Activated B cell treated with CpG ODN at 0.5 μM for 24 hours (primary cell): ENCODE measurements at regions of chr2 and their contacts with region 1.

Region 1: DNA sequence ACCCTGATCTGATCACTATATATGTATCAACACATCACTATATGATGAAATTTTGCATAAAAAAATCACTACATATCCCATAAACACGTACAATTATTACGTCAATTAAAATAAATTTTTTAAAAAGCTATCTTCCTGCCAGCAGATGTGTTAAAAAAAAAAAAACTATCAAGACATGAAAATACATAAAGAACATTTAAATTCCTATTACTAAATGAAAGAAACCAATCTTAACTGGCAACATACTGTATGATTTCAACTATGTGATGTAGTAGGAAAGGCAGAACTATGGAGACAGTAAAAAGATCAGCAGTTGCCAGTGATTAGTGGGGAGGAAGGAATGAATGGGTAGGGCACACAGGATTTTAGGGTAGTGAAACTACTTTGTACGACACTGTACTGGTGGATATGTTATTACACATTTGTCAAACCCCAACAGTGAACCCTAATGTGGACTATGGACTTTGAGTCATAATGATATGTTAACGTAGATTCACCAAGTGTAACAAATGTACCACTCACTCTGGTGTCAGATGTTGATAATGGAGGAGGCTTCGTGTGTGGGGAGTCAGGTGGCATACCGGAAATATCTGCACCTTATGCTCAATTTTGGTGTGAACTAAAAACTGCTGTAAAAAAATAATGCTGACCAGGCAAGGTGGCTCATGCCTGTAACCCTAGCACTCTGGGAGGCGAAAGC is 27.4 kb downstream of the USP34 start:
- DNase-seq: no peak
- ATAC-seq: peak; percentile 84
- H3K4me3 Mint-ChIP-seq: peak overlapping the region; percentile 44
- H3K27ac Mint-ChIP-seq: peak overlapping the region; percentile 78
- H3K4me1 Mint-ChIP-seq: peaks cover 79% of the 10 kb centered on the region
- H3K27me3 Mint-ChIP-seq: no peaks in the 10 kb centered on the region
- CTCF ChIP-seq: no peak

Region 2: GRCh38 chr2:61456070-61456745 is 12.7 kb after region 1 on chr2:
- CTCF ChIA-PET with region 1: no interaction called
- POLR2A ChIA-PET with region 1: interaction called, 3 read pairs
- intact Hi-C with region 1: loop called (anchors 2 kb)
- DNase-seq: no peak
- ATAC-seq: no peak
- H3K4me3 Mint-ChIP-seq: no peak overlapping the region
- H3K27ac Mint-ChIP-seq: no peak overlapping the region
- H3K4me1 Mint-ChIP-seq: peaks cover 67% of the 10 kb centered on the region
- H3K27me3 Mint-ChIP-seq: no peaks in the 10 kb centered on the region
- CTCF ChIP-seq: no peak

Region 3: DNA sequence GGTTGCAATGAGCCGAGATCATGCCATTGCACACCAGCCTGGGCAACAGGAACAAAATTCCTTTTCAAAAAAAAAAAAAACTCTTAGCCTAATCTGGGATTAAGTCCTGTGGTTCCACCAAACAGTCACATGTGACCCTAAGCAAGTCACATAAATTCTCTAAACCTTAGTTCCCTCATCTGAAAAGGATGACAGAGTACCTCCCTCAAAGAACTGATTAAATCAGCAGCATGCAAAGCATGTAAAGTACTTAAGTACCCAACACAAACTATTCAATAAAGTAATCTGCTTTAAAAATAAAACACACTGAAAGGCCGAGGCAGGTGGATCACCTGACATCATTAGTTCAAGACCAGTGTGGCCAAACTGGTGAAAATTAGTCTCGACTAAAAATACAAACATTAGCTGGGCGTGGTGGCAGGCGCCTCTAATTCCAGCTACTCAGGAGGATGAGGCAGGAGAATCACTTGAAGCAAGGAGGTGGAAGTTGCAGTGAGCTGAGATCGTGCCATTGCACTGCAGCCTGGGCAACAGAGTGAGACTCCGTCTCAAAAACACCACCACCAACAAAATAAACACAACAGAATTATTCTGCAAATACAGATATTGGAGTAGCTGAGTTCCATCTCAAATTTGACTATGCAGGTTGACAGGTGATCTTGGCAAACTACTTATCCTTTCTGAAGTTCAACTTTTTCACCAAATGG is 20.4 kb after region 1 on chr2:
- CTCF ChIA-PET with region 1: no interaction called
- POLR2A ChIA-PET with region 1: interaction called, 14 read pairs
- intact Hi-C with region 1: loop called (anchors 1 kb)
- DNase-seq: no peak
- ATAC-seq: peak; percentile 29
- H3K4me3 Mint-ChIP-seq: peak overlapping the region; percentile 66
- H3K27ac Mint-ChIP-seq: peak overlapping the region; percentile 81
- H3K4me1 Mint-ChIP-seq: peaks cover 66% of the 10 kb centered on the region
- H3K27me3 Mint-ChIP-seq: no peaks in the 10 kb centered on the region
- CTCF ChIP-seq: no peak

Region 4: GRCh38 chr2:61470965-61471904 is 27.7 kb after region 1 on chr2 and contains the start of gene USP34:
- CTCF ChIA-PET with region 1: no interaction called
- POLR2A ChIA-PET with region 1: interaction called, 14 read pairs
- intact Hi-C with region 1: loop called (anchors 1 kb)
- DNase-seq: peak; percentile 79
- ATAC-seq: peak; percentile 82
- H3K4me3 Mint-ChIP-seq: peak within 1 kb of the TSS; percentile 95
- H3K27ac Mint-ChIP-seq: peak within 1 kb of the TSS; percentile 95
- H3K4me1 Mint-ChIP-seq: peaks cover 38% of the 10 kb centered on the region
- H3K27me3 Mint-ChIP-seq: no peaks in the 10 kb centered on the region
- CTCF ChIP-seq: no peak
- total RNA-seq, gene USP34: 142 and 176 TPM in 2 replicates